ENCODE measurements at regions of chr20 and their contacts with region 1.

Region 1: GRCh38 chr20:45318948-45319347 is 10.8 kb upstream of the MATN4 start:
- DNase-seq: no peak
- H3K4me3 Mint-ChIP-seq: peak overlapping the region; percentile 62
- H3K27ac Mint-ChIP-seq: peak overlapping the region; percentile 93
- H3K4me1 Mint-ChIP-seq: peaks cover 63% of the 10 kb centered on the region
- H3K27me3 Mint-ChIP-seq: peaks cover 3% of the 10 kb centered on the region

Region 2: DNA sequence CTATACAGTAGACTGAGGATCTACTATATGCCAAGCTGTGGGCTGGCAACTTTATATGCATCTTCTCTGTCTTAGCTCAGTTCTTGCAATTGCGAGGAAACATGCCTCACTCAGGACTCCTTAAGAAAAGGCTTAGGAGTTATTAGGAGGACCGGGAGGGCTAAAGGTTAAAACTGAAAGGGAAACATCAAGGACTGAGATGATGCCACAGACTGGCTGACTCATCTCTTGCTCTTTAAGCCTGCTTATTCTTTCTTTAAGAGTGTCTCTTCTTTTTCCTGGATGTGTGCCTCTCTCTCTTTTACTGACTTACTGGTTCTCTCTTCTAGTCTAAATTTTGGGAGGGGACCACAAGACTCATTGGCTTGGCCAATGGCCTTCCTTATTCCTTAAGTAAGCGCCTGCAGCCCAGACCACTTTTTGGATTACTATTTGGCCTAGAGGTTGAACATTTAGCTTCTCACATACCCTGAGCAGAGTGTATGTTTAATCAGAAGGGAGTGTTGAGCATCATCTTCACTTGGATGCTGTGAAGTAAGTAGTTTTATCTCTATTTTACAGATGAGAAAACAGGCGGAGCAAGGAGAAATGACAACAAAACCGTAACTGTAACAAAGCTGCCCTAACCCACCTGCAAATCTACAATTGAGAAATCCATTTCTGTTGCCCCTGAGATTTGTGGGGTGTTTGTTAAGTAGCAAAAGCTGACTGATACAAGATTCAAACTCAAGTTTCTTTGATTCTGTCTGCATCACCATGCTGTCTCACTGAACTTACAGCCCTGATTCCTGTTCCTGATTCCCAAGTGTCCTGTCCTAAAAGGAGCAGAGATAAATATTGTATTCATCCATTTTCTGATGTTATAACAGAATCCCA is 36.5 kb after region 1 on chr20:
- intact Hi-C with region 1: loop called (anchors 2 kb)
- DNase-seq: peak; percentile 14
- H3K4me3 Mint-ChIP-seq: peak overlapping the region; percentile 75
- H3K27ac Mint-ChIP-seq: peak overlapping the region; percentile 91
- H3K4me1 Mint-ChIP-seq: peaks cover 68% of the 10 kb centered on the region
- H3K27me3 Mint-ChIP-seq: no peaks in the 10 kb centered on the region

Region 3: GRCh38 chr20:45436732-45437391 is 117.9 kb after region 1 on chr20:
- intact Hi-C with region 1: loop called (anchors 1 kb)
- DNase-seq: peak; percentile 78
- H3K4me3 Mint-ChIP-seq: peak overlapping the region; percentile 69
- H3K27ac Mint-ChIP-seq: no peak overlapping the region
- H3K4me1 Mint-ChIP-seq: peaks cover 33% of the 10 kb centered on the region
- H3K27me3 Mint-ChIP-seq: no peaks in the 10 kb centered on the region

Region 4: GRCh38 chr20:45450097-45450818 is 131.3 kb after region 1 on chr20:
- intact Hi-C with region 1: loop called (anchors 1 kb)
- DNase-seq: no peak
- H3K4me3 Mint-ChIP-seq: no peak overlapping the region
- H3K27ac Mint-ChIP-seq: no peak overlapping the region
- H3K4me1 Mint-ChIP-seq: peaks cover 15% of the 10 kb centered on the region
- H3K27me3 Mint-ChIP-seq: peaks cover 8% of the 10 kb centered on the region

Region 5: GRCh38 chr20:45592574-45593189 is 273.7 kb after region 1 on chr20:
- intact Hi-C with region 1: no loop called
- DNase-seq: no peak
- H3K4me3 Mint-ChIP-seq: no peak overlapping the region
- H3K27ac Mint-ChIP-seq: no peak overlapping the region
- H3K4me1 Mint-ChIP-seq: no peaks in the 10 kb centered on the region
- H3K27me3 Mint-ChIP-seq: peaks cover 9% of the 10 kb centered on the region